ENCODE measurements at regions of chr20 and their contacts with region 1.

Region 1: DNA sequence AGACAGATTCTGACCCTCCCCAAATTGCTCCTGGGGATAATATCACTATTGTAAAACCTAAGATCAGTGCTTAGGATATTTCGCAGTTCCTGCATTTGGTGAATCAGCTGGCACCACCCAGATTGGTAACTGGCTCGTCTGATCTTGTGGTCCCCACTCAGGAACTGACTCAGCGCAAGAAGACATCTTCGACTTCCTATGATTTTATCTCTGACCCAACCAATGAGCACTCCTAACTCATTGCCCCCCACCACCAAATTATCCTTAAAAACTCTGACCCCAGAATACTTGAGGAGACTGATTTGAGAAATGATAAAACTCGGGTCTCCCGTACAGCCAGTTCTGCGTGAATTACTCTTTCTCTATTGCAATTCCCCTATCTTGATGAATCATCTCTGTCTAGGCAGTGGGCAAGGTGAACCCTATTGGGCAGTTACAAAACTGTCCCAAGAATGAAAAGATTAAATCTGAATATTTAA is 55.7 kb upstream of the PRND start:
- DNase-seq: peak; percentile 92
- ATAC-seq: peak; percentile 95
- H3K4me3 ChIP-seq: peak overlapping the region; percentile 43; the same call in 1 of the 2 replicates
- H3K27ac ChIP-seq: peak overlapping the region; percentile 69
- H3K4me1 ChIP-seq: peaks cover 19% of the 10 kb centered on the region
- H3K27me3 ChIP-seq: no peaks in the 10 kb centered on the region
- CTCF ChIP-seq: no peak

Region 2: GRCh38 chr20:4740774-4741431 is 74.9 kb after region 1 on chr20:
- CTCF ChIA-PET with region 1: no interaction called
- POLR2A ChIA-PET with region 1: no interaction called
- intact Hi-C with region 1: no loop called
- DNase-seq: peak; percentile 68
- ATAC-seq: peak; percentile 33; the same call in 1 of the 2 replicates
- H3K4me3 ChIP-seq: no peak overlapping the region
- H3K27ac ChIP-seq: no peak overlapping the region
- H3K4me1 ChIP-seq: no peaks in the 10 kb centered on the region
- H3K27me3 ChIP-seq: no peaks in the 10 kb centered on the region
- CTCF ChIP-seq: peak; percentile 95

Region 3: GRCh38 chr20:4787069-4787468 is 121.0 kb after region 1 on chr20:
- CTCF ChIA-PET with region 1: no interaction called
- POLR2A ChIA-PET with region 1: interaction called, 16 read pairs
- intact Hi-C with region 1: no loop called
- DNase-seq: no peak
- ATAC-seq: no peak
- H3K4me3 ChIP-seq: no peak overlapping the region
- H3K27ac ChIP-seq: no peak overlapping the region
- H3K4me1 ChIP-seq: no peaks in the 10 kb centered on the region
- H3K27me3 ChIP-seq: no peaks in the 10 kb centered on the region
- CTCF ChIP-seq: no peak